Activated CD4-positive, alpha-beta memory T cell treated with anti-CD3 and anti-CD28 coated beads, Interleukin-2, amount 10 ng/mL, durations not matched to agents 7 days and 5 days (primary cell): ENCODE measurements at regions of chr19 and their contacts with region 1.

Region 1: DNA sequence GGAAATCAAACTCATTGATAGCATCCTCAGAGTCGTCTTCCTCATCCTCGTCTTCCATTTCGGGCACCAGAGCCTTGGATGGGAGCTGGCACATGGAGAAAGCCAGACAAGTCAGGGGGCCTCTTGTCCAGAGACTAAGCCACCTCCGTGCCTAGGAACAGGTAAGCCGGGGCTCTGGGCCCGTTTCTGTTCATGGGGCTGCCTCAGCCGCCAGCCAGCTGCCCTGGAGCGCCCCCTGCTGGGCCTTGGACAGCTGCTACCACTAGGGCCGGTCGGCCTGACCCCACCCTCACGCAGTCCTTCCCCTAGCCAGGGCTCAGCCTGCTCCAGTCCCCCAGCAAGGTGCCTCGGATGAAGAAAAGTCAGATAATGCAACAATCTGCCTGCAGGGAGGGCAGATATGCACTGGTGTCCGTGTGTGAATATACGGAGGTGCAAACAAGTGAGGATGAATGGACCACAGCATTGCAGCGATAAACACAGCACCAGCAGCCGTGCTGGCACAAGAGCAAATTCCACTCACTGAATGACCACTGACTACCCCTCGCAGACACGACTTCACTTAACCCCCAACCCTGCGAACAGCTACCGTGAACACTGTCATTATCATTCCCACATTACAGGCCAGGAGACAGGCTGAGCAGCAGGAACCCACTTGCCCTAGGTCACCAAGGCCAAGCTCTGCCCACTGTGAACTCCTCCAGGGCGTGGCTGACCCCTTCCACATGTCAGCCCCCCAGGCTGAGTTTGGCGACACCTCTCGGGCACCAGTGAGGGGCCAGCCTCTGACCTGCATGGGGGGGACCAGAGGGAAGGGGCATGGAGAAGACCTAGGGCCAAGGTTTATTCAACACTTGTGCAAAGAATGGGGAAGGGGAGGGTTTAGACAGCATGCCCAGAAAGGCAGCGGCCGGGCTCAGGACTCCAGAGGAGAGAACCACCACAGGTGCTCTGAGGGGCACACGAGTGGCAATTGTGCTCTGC is 12.1 kb upstream of the PRKD2 start:
- DNase-seq: peak; percentile 85
- H3K4me3 Mint-ChIP-seq: no peak overlapping the region
- H3K27ac Mint-ChIP-seq: no peak overlapping the region
- H3K4me1 Mint-ChIP-seq: peaks cover 31% of the 10 kb centered on the region
- H3K27me3 Mint-ChIP-seq: no peaks in the 10 kb centered on the region

Region 2: DNA sequence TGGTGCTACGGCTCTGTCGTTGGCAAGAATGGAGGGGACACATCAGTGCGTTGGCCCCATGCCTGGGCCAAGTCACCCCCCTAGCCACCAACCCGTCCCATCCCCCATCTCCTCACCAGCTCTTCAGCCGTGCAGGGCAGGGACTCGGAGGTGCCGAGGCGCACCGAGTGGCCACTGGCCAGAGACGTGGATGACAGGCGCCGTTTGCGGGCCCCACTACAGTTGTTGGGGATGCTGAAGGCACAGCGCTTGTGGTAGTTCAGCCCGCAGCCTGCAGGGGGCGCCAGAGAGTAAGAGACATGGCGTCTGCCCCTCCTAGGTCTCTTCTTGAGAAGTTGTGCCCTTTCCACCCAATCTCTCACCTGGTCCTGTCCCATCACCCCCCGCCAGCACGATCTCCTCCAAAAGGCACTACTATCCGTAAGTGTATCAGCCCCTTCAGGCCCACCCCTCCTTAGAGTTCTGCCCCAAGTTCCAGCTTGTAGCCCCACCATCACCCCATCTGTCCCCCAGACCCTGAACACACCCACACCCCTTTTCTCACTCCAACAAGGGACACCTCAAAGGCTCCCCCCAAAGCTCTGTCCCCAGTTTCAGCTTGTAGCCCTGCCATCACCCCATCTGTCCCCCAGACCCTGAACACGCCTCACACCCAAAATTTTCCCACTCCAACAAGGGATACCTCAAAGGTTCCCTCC is 24.5 kb before region 1 on chr19:
- CTCF ChIA-PET with region 1: interaction called, 53 read pairs
- POLR2A ChIA-PET with region 1: interaction called, 6 read pairs
- DNase-seq: peak; percentile 87
- H3K4me3 Mint-ChIP-seq: no peak overlapping the region
- H3K27ac Mint-ChIP-seq: peak overlapping the region; percentile 59
- H3K4me1 Mint-ChIP-seq: peaks cover 17% of the 10 kb centered on the region
- H3K27me3 Mint-ChIP-seq: no peaks in the 10 kb centered on the region

Region 3: DNA sequence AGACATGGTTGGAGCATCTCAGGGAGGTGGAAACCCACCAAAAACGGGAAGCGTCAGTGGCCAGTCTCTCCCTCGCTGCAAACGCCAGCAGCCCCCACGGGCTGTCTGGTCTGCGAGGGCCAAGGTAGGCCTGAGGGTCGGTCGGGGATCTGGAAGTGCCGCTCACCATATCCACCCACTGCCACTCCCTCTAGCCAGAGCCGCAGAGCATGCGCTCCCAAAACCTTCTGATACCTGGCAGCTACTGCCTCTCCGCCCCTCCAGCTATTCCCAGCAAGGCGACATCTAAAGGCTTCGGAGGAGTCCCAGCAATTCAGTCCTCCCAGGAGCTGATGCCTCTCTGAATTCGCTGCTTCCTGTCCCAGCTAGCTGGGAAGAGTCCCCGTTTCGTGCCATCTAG is 12.5 kb after region 1 on chr19:
- CTCF ChIA-PET with region 1: interaction called, 12 read pairs
- POLR2A ChIA-PET with region 1: interaction called, 3 read pairs
- DNase-seq: no peak
- H3K4me3 Mint-ChIP-seq: no peak overlapping the region
- H3K27ac Mint-ChIP-seq: no peak overlapping the region
- H3K4me1 Mint-ChIP-seq: peaks cover 43% of the 10 kb centered on the region
- H3K27me3 Mint-ChIP-seq: no peaks in the 10 kb centered on the region

Region 4: GRCh38 chr19:46935066-46935663 is 206.2 kb after region 1 on chr19:
- CTCF ChIA-PET with region 1: no interaction called
- POLR2A ChIA-PET with region 1: no interaction called
- DNase-seq: no peak
- H3K4me3 Mint-ChIP-seq: peak overlapping the region; percentile 26
- H3K27ac Mint-ChIP-seq: peak overlapping the region; percentile 77
- H3K4me1 Mint-ChIP-seq: peaks cover 60% of the 10 kb centered on the region
- H3K27me3 Mint-ChIP-seq: no peaks in the 10 kb centered on the region